ENCODE measurements at regions of chr2 and their contacts with region 1.

Region 1: DNA sequence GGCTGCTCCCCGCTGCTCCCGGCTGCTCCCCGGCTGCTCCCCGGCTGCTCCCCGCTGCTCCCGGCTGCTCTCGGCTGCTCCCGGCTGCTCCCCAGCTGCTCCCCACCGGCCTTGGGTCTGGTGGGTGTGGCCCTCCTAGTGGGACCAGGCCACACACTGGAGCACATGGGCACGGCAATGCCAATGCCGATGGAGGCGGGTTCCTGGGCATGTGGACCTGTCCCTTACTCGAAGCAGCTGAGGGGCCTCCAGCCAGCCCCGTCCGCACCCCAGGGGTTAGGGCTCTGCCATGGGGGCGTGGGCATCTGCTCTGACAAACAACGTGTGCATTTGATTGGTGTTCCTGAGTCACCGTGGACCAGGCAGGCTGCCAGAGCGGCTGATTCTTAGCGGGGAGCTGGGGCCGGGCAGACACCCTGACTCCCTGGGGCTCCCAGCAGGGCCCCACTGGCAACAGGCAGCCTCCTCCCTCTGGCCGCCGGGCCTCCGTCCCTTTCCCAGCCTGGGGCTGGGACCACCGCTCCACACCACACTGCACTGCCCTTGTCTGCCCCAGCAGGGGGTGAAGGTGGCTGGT is 1.9 kb upstream of the GAL3ST2 start:
- DNase-seq: peak; percentile 79
- ATAC-seq: peak; percentile 12
- H3K4me3 ChIP-seq: peak overlapping the region; percentile 49 to 82 (median 63)
- H3K27ac ChIP-seq: peak overlapping the region; percentile 92
- H3K4me1 ChIP-seq: peaks cover 75% of the 10 kb centered on the region
- H3K27me3 ChIP-seq: no peaks in the 10 kb centered on the region; a peak in 1 of 5 replicates
- CTCF ChIP-seq: no peak
- EP300 ChIP-seq: no peak
- POLR2A ChIP-seq: peak in 1 of 2 experiments; percentile 35; a peak in 1 of 4 replicates
- RAD21 ChIP-seq: no peak; the same call in 1 of the 2 replicates

Region 2: DNA sequence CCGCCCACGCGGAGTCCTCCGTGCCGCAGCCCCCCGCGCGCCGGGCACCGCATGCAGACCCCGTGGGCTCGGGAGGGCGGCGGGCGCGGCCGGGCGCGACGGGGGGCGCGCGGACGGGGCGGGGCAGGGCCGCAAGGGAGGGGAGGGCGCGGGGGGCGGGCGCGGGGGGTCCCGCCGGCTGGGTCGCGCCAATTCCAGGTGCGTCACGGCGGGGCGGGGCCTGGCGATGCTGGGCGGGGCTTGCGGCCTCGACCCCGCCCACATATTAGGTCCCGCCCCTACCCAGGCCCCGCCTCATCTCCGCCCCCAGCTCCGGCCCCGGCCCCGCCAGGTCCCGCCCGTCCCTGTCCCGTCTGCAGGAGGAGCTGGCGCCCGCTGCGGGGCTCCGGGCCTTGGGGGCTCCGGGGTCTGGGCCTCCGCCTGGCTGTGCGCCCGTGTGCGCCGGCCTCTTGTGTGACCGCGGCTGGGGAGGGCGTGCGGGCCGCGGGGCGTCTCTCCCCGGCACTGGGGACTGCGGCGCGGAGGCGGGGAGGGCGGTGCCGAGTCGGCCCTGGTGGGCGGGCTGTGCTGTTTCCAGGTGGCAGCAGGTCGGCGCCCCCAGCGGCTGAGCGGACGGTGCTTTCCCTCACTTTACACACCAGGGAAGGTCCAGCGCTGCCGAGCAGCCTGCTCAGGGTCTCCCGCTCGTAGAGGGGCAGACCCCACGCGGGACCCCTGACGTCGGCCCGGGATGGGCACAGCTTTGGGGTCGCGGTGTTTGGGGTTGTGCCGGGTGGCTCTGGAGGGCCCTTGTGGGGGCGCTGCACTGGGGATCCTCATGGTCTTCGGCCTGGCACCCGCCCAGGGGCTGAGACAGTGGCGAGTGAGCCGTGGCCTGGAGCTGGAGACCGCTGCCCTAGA is 72.4 kb before region 1 on chr2:
- CTCF ChIA-PET with region 1: no interaction called
- POLR2A ChIA-PET with region 1: interaction called, 58 read pairs
- in situ Hi-C with region 1: no loop called
- intact Hi-C with region 1: no loop called
- DNase-seq: peak; percentile 85
- ATAC-seq: peak; percentile 86
- H3K4me3 ChIP-seq: peak overlapping the region; percentile 81 to 99 (median 94)
- H3K27ac ChIP-seq: peak overlapping the region; percentile 98
- H3K4me1 ChIP-seq: peaks cover 28% of the 10 kb centered on the region
- H3K27me3 ChIP-seq: no peaks in the 10 kb centered on the region
- CTCF ChIP-seq: peak; percentile 86
- EP300 ChIP-seq: no peak
- POLR2A ChIP-seq: peak; percentile 38 to 45; a peak in 2 of 4 replicates
- RAD21 ChIP-seq: peak; percentile 81

Region 3: DNA sequence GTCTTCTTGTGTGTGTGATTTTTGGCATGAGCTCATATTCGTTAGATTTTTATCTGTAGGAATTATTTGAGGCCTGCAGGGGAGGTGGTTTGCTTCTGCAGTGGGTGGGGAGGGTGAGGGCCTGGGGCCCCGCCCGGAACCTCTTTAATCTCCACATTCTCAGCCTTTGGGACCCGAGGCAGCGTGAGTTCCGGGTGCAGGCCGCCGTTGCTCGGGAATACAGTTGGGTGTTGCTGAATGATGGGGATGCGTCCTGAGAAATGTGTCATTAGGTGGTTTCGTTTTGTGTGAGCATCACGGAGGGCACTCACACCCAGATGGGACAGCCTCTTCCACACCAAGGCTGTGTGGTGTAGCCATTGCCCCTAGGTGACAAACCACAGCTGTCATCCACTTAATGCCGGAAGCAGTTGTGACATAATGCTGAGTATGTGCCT is 11.8 kb before region 1 on chr2:
- CTCF ChIA-PET with region 1: no interaction called
- POLR2A ChIA-PET with region 1: interaction called, 37 read pairs
- in situ Hi-C with region 1: no loop called
- intact Hi-C with region 1: no loop called
- DNase-seq: no peak
- ATAC-seq: no peak
- H3K4me3 ChIP-seq: no peak overlapping the region
- H3K27ac ChIP-seq: no peak overlapping the region
- H3K4me1 ChIP-seq: 0 out of 2 replicates have a peak, but pooled peaks cover 6% of the 10 kb centered on the region
- H3K27me3 ChIP-seq: no peaks in the 10 kb centered on the region
- CTCF ChIP-seq: no peak
- EP300 ChIP-seq: no peak
- POLR2A ChIP-seq: no peak
- RAD21 ChIP-seq: no peak

Region 4: DNA sequence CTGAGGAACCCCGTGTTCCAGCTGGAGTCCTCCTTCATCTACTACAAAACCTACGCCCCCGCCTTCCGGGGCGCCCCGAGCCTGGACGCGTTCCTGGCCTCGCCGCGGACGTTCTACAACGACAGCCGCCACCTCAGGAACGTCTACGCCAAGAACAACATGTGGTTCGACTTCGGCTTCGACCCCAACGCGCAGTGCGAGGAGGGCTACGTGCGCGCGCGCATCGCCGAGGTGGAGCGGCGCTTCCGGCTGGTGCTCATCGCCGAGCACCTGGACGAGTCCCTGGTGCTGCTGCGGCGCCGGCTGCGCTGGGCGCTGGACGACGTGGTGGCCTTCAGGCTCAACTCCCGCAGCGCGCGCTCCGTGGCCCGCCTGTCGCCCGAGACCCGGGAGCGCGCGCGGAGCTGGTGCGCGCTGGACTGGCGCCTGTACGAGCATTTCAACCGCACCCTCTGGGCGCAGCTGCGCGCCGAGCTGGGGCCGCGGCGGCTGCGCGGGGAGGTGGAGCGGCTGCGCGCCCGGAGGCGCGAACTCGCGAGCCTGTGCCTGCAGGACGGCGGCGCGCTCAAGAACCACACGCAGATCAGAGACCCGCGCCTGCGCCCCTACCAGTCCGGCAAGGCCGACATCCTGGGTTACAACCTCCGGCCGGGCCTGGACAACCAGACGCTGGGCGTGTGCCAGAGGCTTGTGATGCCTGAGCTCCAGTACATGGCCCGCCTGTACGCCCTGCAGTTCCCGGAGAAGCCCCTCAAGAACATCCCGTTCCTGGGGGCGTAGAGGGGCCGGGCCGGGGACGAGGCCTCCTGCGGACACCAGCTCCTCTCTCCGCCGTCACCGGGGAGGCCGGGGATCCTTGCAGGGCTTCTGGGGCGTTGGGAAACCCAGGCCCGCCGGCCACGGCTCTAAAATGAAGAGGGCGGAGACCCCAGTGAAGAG is 28.9 kb after region 1 on chr2:
- CTCF ChIA-PET with region 1: no interaction called
- POLR2A ChIA-PET with region 1: interaction called, 218 read pairs
- in situ Hi-C with region 1: loop called (anchors 5 kb)
- intact Hi-C with region 1: loop called (anchors 2 kb)
- DNase-seq: no peak
- ATAC-seq: no peak
- H3K4me3 ChIP-seq: no peak overlapping the region
- H3K27ac ChIP-seq: no peak overlapping the region
- H3K4me1 ChIP-seq: peaks cover 29% of the 10 kb centered on the region
- H3K27me3 ChIP-seq: no peaks in the 10 kb centered on the region; a peak in 1 of 5 replicates
- CTCF ChIP-seq: no peak
- EP300 ChIP-seq: no peak
- POLR2A ChIP-seq: no peak
- RAD21 ChIP-seq: no peak

Region 5: DNA sequence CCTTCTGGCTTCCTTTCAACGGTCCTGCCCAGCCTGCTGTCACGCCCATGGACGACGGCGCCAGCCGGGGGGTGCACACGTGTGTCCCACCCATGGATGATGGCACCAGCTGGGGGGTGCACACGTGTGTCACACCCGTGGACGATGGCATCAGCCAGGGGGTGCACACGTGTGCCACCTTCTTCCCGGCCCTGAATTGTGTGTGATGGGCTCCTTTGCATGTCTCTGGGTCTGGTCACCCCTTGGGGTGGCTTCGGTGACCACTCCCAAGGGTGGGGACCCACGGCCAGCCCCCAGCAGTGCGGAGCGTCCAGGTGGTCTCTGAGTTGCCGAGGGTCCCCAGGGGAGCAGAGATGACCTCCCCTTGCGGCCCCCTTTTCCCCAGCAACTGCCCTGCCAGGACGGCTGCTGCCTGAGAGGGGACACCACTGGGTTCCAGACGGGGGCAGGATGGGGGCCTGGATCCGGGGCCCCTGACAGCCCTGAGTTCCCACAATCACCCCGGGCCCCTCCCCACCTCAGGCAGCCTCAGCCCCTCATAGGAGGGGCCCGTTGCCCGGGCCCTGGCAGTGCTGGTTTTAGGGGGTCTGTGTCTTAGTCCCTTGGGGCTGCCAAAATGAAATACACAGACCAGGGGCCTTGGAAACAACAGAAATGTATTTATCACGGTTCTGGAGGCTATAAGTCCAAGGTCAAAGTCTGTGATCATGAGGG is 43.7 kb after region 1 on chr2:
- CTCF ChIA-PET with region 1: no interaction called
- POLR2A ChIA-PET with region 1: interaction called, 8 read pairs
- in situ Hi-C with region 1: no loop called
- intact Hi-C with region 1: loop called (anchors 2 kb)
- DNase-seq: no peak
- ATAC-seq: no peak; the same call in 1 of the 3 replicates
- H3K4me3 ChIP-seq: peak overlapping the region in 1 of 3 experiments; percentile 38; a peak in 1 of 6 replicates
- H3K27ac ChIP-seq: peak overlapping the region; percentile 59
- H3K4me1 ChIP-seq: peaks cover 27% of the 10 kb centered on the region
- H3K27me3 ChIP-seq: peaks cover 0 to 8% of the 10 kb centered on the region in 2 experiments; a peak in 1 of 5 replicates
- CTCF ChIP-seq: no peak
- EP300 ChIP-seq: no peak
- POLR2A ChIP-seq: no peak
- RAD21 ChIP-seq: no peak; the same call in 1 of the 2 replicates